Dorsolateral prefrontal cortex (tissue), 120 donors: ENCODE measurements at regions of chr2 and their contacts with region 1.

Region 1: GRCh38 chr2:24046930-24047702 is at the start of gene WDCP:
- DNase-seq: peak; percentile 90 to 100 (median 98)
- H3K4me3 ChIP-seq: peak within 1 kb of the TSS; percentile 40 to 93 (median 80)
- H3K27ac ChIP-seq: peak within 1 kb of the TSS in 40 of 59 donors; percentile 3 to 85 (median 62)
- H3K27me3 ChIP-seq: no peaks in the 10 kb centered on the region
- CTCF ChIP-seq: peak in 18 of 56 donors; percentile 4 to 46 (median 20)
- total RNA-seq, gene WDCP: 5.7 to 17.2 (median 10.7) TPM

Region 2: GRCh38 chr2:23824777-23825212 is 222.3 kb before region 1 on chr2:
- intact Hi-C with region 1: loop called in 1 of 2 experiments (anchors 10 kb)
- DNase-seq: no peak
- H3K4me3 ChIP-seq: no peak overlapping the region
- H3K27ac ChIP-seq: no peak overlapping the region
- H3K27me3 ChIP-seq: no peaks in the 10 kb centered on the region
- CTCF ChIP-seq: peak; percentile 35 to 84 (median 72)

Region 3: DNA sequence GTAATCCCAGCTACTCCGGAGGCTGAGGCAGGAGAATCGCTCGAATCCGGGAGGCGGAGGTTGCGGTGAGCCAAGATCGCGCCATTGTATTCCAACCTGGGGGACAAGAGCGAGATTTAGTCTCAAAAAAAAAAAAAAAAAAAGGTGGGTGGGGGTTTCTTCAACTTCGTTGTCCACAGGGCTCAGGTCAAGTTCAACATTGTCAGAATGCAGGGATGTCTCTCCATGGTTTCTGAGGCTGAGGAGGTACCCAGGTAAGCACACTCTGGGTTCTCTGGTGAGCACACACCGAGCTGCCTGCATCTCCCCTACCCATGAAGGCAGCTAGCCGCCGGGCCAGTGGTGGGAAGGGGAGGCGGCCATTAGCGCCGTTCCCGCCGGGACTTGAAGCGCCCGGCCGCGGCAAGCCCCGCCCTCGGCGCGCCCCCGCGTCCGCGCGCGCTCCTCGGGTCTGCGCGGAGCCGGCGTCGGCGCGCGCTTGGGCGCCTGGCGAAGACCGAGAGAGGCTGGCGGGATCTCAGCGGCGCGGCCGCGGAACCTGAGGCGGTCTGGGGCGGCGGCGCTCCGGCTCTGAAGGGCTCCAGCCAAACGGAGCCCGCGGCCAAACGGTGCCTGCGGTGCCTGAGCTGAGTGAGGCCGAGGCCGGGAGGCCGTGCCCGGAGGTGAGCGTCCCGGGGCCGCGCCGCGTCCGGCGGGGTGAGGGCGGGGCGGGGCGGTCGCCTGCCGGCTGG is 107.0 kb before region 1 on chr2 and contains the start of gene UBXN2A:
- intact Hi-C with region 1: loop called in 1 of 2 experiments (anchors 5 kb)
- DNase-seq: peak; percentile 45 to 87 (median 63)
- H3K4me3 ChIP-seq: peak within 1 kb of the TSS; percentile 64 to 99 (median 87)
- H3K27ac ChIP-seq: peak within 1 kb of the TSS in 57 of 59 donors; percentile 23 to 94 (median 82)
- H3K27me3 ChIP-seq: no peaks in the 10 kb centered on the region
- CTCF ChIP-seq: peak in 4 of 56 donors; percentile 11 to 26 (median 18)
- total RNA-seq, gene UBXN2A: 14.4 to 32.7 (median 20.0) TPM

Region 4: DNA sequence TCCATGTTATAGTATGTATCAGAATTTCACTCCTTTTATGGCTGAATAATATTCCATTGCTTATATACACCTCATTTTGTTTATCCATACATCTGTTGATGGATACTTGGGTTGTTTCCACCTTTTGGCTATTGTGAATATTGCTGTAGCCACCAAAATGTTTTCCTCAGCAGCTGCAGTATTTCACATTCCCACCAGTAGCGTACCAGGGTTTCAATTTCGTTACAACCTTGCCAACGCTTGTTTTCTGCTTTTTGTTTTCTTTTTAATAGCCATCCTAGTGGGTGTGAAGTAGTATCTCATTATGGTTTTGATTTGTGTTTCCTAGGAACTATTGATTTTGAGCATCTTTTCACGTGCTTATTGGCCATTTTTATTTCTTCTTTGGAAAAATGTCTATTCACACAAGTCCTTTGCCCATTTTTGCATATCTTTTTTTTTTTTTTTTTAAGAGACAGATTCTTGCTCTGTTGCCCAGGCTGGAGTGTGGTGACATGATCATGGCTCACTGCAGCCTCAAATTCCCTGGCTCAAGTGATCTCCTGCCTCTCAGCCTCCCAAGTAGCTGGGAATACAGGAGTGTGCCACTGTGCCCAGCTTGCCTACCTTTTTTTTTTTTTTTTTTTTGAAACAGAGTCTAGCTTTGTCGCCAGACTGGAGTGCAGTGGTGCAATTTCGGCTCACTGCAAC is 92.6 kb before region 1 on chr2:
- intact Hi-C with region 1: no loop called
- DNase-seq: no peak
- H3K4me3 ChIP-seq: peak overlapping the region in 1 of 59 donors; percentile 14
- H3K27ac ChIP-seq: no peak overlapping the region
- H3K27me3 ChIP-seq: no peaks in the 10 kb centered on the region
- CTCF ChIP-seq: no peak